Esophagus squamous epithelium (tissue), 5 donors: ENCODE measurements at regions of chr3 and their contacts with region 1.

Region 1: GRCh38 chr3:46935168-46935858 is 41.2 kb downstream of the CCDC12 start:
- DNase-seq: no peak
- H3K4me3 ChIP-seq: no peak overlapping the region
- H3K27ac ChIP-seq: peak overlapping the region; percentile 86 to 94 (median 90)
- H3K4me1 ChIP-seq: peaks cover 60 to 97% (median 64%) of the 10 kb centered on the region in 3 donors
- H3K27me3 ChIP-seq: no peaks in the 10 kb centered on the region
- CTCF ChIP-seq: peak in 4 of 6 experiments; percentile 15 to 51 (median 40)
- POLR2A ChIP-seq: no peak

Region 2: DNA sequence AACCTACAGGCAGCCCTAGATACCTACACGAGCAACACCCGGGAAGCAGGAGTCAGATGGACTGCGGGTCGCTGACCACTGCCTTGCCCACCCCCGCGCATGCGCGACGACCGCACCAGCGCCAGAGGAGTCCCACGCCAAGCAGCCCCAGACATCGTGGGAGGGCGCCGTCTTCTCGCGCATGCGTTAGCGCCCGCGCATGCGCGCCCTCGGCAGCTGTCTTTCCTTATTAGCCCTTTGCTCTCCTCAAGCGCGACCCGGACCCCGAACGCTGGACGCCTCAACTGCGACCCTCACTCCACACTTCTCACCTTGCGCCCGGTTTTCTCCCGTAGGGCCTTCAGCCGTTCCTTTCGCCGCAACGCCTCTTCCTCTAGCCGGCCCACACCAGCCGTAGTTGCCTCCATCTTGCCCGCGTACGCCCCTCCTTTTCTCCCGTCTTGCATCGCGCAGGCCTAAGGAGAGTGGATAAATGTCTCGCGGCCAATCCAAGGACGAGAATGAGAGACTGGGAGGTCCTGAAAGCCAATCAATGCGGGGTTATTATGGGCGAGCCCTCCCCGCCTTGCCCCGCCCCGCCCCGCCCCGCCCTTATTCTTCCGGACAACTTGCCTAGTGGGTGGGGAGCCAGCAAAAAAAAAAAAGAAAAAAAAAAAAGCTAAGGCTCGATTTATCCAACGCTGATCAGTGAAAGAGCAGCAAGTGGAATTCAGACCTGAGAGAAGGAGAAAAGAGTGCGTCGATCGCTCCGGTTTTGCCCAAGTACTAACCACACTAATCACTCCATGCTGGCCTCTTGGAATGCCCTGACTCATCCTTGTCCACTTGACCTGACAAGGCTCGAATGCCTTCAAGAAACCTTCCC is 41.2 kb after region 1 on chr3 and contains the start of gene CCDC12:
- intact Hi-C with region 1: loop called (anchors 5 kb)
- DNase-seq: peak; percentile 92
- H3K4me3 ChIP-seq: peak within 1 kb of the TSS; percentile 45 to 83 (median 74)
- H3K27ac ChIP-seq: peak within 1 kb of the TSS; percentile 91 to 99 (median 97)
- H3K4me1 ChIP-seq: peaks cover 24 to 86% (median 57%) of the 10 kb centered on the region in 3 donors
- H3K27me3 ChIP-seq: no peaks in the 10 kb centered on the region
- CTCF ChIP-seq: peak in 1 of 6 experiments; percentile 31
- POLR2A ChIP-seq: peak in 3 of 4 donors; percentile 50 to 85 (median 71)
- total RNA-seq, gene CCDC12: 55.5 to 87.5 (median 67.5) TPM